Activated CD8-positive, alpha-beta memory T cell treated with anti-CD3 and anti-CD28 coated beads, Interleukin-2, amount 10 ng/mL, durations not matched to agents 7 days and 5 days (primary cell): ENCODE measurements at regions of chr7 and their contacts with region 1.

Region 1: GRCh38 chr7:127266047-127266446 is 13.3 kb upstream of the GRM8 start:
- DNase-seq: no peak
- ATAC-seq: no peak
- H3K4me3 Mint-ChIP-seq: no peak overlapping the region
- H3K27ac Mint-ChIP-seq: no peak overlapping the region
- H3K4me1 Mint-ChIP-seq: no peaks in the 10 kb centered on the region
- H3K27me3 Mint-ChIP-seq: peaks cover 66% of the 10 kb centered on the region

Region 2: GRCh38 chr7:127253281-127254162 is 12.5 kb before region 1 on chr7:
- CTCF ChIA-PET with region 1: interaction called, 10 read pairs
- DNase-seq: peak; percentile 63
- ATAC-seq: peak; percentile 81
- H3K4me3 Mint-ChIP-seq: peak overlapping the region; percentile 74
- H3K27ac Mint-ChIP-seq: no peak overlapping the region
- H3K4me1 Mint-ChIP-seq: peaks cover 11% of the 10 kb centered on the region
- H3K27me3 Mint-ChIP-seq: peaks cover 75% of the 10 kb centered on the region